Transverse colon (tissue), 4 donors: ENCODE measurements at regions of chr2 and their contacts with region 1.

Region 1: GRCh38 chr2:30721668-30722647 is 85.3 kb downstream of the CAPN13 start:
- DNase-seq: no peak
- H3K4me3 ChIP-seq: no peak overlapping the region
- H3K27ac ChIP-seq: no peak overlapping the region
- H3K4me1 ChIP-seq: no peaks in the 10 kb centered on the region
- H3K27me3 ChIP-seq: peaks cover 9% of the 10 kb centered on the region
- CTCF ChIP-seq: no peak
- EP300 ChIP-seq: no peak
- POLR2A ChIP-seq: no peak

Region 2: GRCh38 chr2:29954316-29954715 is 767.6 kb before region 1 on chr2:
- in situ Hi-C with region 1: no loop called
- intact Hi-C with region 1: no loop called
- DNase-seq: no peak
- H3K4me3 ChIP-seq: no peak overlapping the region
- H3K27ac ChIP-seq: no peak overlapping the region
- H3K4me1 ChIP-seq: no peaks in the 10 kb centered on the region
- H3K27me3 ChIP-seq: no peaks in the 10 kb centered on the region
- CTCF ChIP-seq: no peak
- EP300 ChIP-seq: no peak
- POLR2A ChIP-seq: no peak

Region 3: DNA sequence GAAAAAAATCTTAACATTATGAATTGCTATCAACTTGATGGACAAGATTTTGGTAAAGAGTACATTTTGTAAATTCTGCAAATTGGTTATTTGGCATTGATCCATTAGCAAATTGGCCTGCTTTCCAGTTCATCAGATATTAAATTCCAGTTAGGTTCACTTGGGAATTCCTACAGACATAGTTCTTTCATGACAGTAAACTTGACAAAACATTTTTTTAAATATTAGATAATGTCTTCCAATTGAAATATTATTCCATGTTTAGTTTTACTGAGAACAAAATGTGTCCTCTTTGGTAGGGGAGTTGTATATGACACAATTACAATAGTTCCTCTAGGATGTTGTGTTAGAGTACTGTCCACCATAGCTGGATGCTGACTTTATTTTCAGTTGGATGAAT is 133.0 kb before region 1 on chr2:
- in situ Hi-C with region 1: no loop called
- intact Hi-C with region 1: no loop called
- DNase-seq: no peak
- H3K4me3 ChIP-seq: no peak overlapping the region
- H3K27ac ChIP-seq: no peak overlapping the region
- H3K4me1 ChIP-seq: no peaks in the 10 kb centered on the region
- H3K27me3 ChIP-seq: no peaks in the 10 kb centered on the region
- CTCF ChIP-seq: no peak
- EP300 ChIP-seq: no peak
- POLR2A ChIP-seq: no peak

Region 4: DNA sequence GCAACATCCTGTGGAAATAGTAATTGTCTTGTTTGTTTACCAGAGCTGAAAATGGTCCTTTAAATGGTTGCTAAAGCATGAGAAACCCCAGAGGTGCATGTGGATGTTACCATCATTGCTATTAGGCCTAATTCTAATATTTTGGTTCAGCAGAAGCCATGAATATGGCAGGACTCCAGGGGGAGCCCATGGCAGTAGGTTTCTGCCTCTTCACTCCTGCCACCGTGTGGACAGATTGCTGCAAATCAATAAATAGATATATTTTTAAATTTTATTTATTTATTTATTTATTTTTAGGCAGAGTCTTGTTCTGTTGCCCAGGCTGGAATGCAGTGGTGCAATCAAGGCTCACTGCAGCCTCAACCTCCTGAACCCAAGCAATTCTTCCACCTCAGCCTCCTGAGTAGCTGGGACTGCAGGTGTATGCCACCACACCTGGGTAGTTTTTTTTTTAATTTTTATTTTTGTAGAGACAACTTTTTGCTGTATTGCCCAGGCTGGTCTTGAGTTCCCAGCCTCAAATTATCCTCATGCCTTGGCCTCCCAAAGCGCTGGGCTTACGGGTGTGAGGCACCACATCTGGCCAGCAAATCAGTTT is 140.2 kb after region 1 on chr2:
- in situ Hi-C with region 1: loop called in 1 of 4 experiments (anchors 10 kb)
- intact Hi-C with region 1: no loop called
- DNase-seq: peak; percentile 49
- H3K4me3 ChIP-seq: no peak overlapping the region
- H3K27ac ChIP-seq: no peak overlapping the region
- H3K4me1 ChIP-seq: no peaks in the 10 kb centered on the region
- H3K27me3 ChIP-seq: no peaks in the 10 kb centered on the region
- CTCF ChIP-seq: peak; percentile 46 to 65 (median 60)
- EP300 ChIP-seq: no peak
- POLR2A ChIP-seq: no peak

Region 5: DNA sequence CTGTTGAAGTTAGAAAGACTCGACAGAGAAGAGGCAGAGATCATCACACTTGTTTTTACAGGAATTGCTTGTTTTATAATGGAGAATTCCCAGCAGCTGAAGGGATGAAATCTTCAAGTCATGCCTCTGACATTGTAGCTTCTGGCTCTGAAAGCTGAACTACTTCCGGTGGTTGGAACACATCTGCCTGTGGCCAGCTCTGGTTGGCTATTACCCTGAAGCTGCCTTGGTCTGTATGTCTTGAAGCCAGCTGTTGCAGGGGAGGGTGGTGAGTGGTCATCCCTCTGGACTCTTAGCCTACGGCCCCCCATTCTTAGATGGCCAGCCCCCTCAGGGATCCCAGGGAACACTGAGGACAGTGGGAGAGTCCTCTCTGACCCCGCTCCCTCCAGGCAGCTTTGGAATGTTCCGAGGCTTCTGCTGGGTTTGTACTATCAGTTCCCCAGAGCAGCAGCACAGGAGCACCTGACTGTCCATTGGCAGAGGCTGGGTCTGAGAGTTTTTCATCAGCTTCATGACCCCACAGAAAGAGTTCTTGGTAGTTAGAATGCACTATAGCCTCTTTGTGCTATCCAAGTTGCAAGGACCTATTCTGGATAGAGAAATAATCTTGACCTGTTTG is 172.7 kb after region 1 on chr2:
- in situ Hi-C with region 1: no loop called
- intact Hi-C with region 1: no loop called
- DNase-seq: no peak
- H3K4me3 ChIP-seq: no peak overlapping the region
- H3K27ac ChIP-seq: no peak overlapping the region
- H3K4me1 ChIP-seq: no peaks in the 10 kb centered on the region
- H3K27me3 ChIP-seq: no peaks in the 10 kb centered on the region
- CTCF ChIP-seq: no peak
- EP300 ChIP-seq: no peak
- POLR2A ChIP-seq: no peak

Region 6: DNA sequence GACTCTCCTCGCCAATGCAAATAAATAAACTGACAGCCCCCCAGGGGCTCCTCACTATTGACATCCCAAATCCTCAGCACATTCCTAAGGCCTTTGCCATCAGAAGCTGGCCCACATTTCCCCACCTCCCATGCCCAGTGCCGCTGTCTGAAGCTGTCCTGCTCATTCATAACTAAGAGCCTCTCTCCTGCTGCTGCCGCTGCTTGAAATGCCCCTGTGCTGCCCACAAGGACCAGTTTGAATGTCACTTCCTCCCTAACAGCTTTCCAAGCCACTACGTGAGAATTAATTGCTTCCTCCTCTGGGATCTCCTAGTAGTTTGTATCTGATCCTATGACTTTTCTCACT is 236.9 kb after region 1 on chr2:
- in situ Hi-C with region 1: no loop called
- intact Hi-C with region 1: no loop called
- DNase-seq: no peak
- H3K4me3 ChIP-seq: no peak overlapping the region
- H3K27ac ChIP-seq: no peak overlapping the region
- H3K4me1 ChIP-seq: peaks cover 0 to 11% (median 3%) of the 10 kb centered on the region in 4 donors
- H3K27me3 ChIP-seq: peaks cover 3% of the 10 kb centered on the region
- CTCF ChIP-seq: no peak
- EP300 ChIP-seq: no peak
- POLR2A ChIP-seq: no peak